Gastrocnemius medialis (tissue), 4 donors: ENCODE measurements at regions of chr20 and their contacts with region 1.

Region 1: DNA sequence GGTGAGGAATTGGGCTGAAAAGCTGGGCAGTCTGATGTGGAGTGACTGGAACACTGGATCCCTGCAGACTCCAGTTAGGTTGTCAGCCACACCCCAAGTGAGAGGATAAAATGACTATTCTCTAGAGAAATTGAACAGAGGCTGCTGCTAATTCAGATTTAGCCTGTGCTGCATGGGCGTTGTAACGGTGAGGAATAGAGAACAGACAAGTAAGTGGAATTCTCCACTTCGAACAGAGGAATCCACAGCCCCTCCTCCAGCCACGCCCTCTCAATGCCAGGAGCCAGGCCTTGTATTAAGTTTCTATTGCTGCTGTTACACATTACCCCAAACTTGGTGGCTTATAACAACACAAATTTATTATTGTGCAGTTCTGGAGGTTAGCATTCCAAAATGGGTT is 109.3 kb downstream of the CFAP61 start:
- DNase-seq: no peak
- ATAC-seq: no peak
- H3K4me3 ChIP-seq: no peak overlapping the region
- H3K27ac ChIP-seq: no peak overlapping the region
- H3K4me1 ChIP-seq: no peaks in the 10 kb centered on the region
- H3K27me3 ChIP-seq: no peaks in the 10 kb centered on the region
- CTCF ChIP-seq: no peak
- POLR2A ChIP-seq: no peak

Region 2: GRCh38 chr20:20199361-20200160 is 38.0 kb after region 1 on chr20:
- in situ Hi-C with region 1: no loop called
- intact Hi-C with region 1: loop called (anchors 5 kb)
- DNase-seq: no peak
- ATAC-seq: no peak
- H3K4me3 ChIP-seq: no peak overlapping the region
- H3K27ac ChIP-seq: no peak overlapping the region
- H3K4me1 ChIP-seq: peaks cover 12 to 29% of the 10 kb centered on the region in 2 donors
- H3K27me3 ChIP-seq: no peaks in the 10 kb centered on the region
- CTCF ChIP-seq: no peak
- POLR2A ChIP-seq: no peak